CD4-positive, alpha-beta memory T cell (primary cell): ENCODE measurements at regions of chr3 and their contacts with region 1.

Region 1: DNA sequence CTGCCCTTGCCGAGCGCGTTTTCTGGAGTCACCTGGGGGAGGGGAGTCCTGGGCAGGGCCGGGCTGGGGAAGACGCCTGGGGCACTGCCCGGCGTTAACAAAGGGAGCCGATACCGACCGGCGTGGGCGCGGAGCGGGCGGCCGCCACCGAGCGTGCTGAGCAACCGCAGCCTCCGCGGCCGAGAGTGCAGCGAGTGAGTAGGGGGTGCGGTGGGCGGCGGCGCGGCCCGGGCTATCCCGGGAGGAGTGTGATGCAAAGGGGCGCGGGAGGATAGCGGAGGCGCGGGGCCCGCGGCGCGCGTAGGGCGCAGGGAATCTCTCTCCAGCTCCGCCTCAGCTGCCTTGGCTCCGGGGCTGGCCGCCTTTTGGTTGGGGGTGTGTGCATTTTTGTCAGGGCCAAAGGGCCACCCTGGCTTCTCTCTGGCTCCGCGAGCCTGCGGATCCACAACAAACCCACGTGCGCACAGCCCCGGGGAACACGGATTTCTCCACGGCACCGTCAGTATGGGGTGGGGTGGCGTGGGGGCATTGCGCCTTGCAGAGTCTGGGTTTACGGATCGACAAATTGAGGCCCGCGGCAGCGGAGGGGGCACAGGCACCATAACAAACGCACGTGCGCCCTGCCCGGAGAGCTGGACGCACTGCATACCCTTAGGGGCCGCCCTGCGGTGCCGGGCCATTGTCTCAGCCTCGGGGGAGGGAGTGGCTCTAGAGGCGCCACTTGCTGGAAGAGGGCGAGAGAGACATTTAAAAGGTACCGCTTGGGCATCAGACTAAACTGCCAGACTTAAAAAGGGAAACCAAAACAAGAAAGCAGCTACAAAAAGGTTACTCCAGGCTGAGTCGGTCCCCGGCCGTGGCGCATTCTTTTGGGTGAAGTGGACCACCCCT is 560 bp downstream of the ST6GAL1 start:
- DNase-seq: peak; percentile 74 to 84 (median 78)
- H3K4me3 ChIP-seq: peak overlapping the region; percentile 85 to 92
- H3K4me3 Mint-ChIP-seq: peak overlapping the region; percentile 91 to 100 (median 99)
- H3K27ac ChIP-seq: peak overlapping the region; percentile 81
- H3K27ac Mint-ChIP-seq: peak overlapping the region; percentile 90 to 98 (median 96)
- H3K4me1 ChIP-seq: peaks cover 37% of the 10 kb centered on the region
- H3K4me1 Mint-ChIP-seq: peaks cover 22 to 58% (median 39%) of the 10 kb centered on the region in 4 donors
- H3K27me3 ChIP-seq: no peaks in the 10 kb centered on the region
- H3K27me3 Mint-ChIP-seq: no peaks in the 10 kb centered on the region

Region 2: GRCh38 chr3:186621894-186622650 is 308.8 kb before region 1 on chr3:
- CTCF ChIA-PET with region 1: no interaction called
- POLR2A ChIA-PET with region 1: no interaction called
- intact Hi-C with region 1: no loop called
- DNase-seq: no peak
- H3K4me3 ChIP-seq: no peak overlapping the region
- H3K4me3 Mint-ChIP-seq: no peak overlapping the region
- H3K27ac ChIP-seq: no peak overlapping the region
- H3K27ac Mint-ChIP-seq: no peak overlapping the region
- H3K4me1 ChIP-seq: peaks cover 4% of the 10 kb centered on the region
- H3K4me1 Mint-ChIP-seq: peaks cover 2 to 6% (median 4%) of the 10 kb centered on the region in 4 donors
- H3K27me3 ChIP-seq: no peaks in the 10 kb centered on the region
- H3K27me3 Mint-ChIP-seq: peaks cover 8 to 14% of the 10 kb centered on the region in 2 donors

Region 3: GRCh38 chr3:186854954-186855353 is 75.9 kb before region 1 on chr3:
- CTCF ChIA-PET with region 1: interaction called, 184 read pairs
- POLR2A ChIA-PET with region 1: interaction called, 104 read pairs
- intact Hi-C with region 1: no loop called
- DNase-seq: no peak
- H3K4me3 ChIP-seq: no peak overlapping the region
- H3K4me3 Mint-ChIP-seq: no peak overlapping the region
- H3K27ac ChIP-seq: no peak overlapping the region
- H3K27ac Mint-ChIP-seq: no peak overlapping the region
- H3K4me1 ChIP-seq: peaks cover 3% of the 10 kb centered on the region
- H3K4me1 Mint-ChIP-seq: peaks cover 5 to 12% (median 8%) of the 10 kb centered on the region in 4 donors
- H3K27me3 ChIP-seq: no peaks in the 10 kb centered on the region
- H3K27me3 Mint-ChIP-seq: no peaks in the 10 kb centered on the region

Region 4: DNA sequence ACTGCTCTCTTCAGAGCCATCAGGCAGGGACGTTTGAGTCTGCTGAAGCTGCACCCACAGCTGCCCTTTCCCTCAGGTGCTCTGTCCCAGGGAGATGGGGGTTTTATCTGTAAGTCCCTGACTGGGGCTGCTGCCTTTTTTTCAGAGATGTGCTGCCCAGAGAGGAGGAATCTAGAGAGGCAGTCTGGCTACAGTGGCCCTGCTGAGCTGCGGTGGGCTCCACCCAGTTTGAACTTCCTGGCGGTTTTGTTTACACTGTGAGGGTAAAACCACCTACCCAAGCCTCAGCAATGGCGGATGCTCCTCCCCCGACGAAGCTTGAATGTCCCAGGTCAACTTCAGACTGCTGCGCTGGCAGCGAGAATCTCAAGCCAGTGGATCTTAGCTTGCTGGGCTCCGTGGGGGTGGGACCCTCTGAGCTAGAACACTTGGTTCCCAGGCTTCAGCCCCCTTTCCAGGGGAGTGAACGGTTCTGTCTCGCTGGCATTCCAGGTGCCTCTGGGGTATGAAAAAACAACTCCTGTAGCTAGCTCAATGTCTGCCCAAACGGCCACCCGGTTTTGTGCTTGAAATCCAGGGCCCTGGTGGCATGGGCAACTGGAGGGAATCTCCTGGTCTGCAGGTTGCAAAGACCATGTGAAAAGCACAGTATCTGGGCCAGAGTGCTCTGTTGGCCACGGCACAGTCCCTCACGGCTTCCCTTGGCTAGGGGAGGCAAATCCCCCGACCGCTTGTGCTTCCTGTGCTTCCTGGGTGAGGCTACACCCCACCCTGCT is 21.6 kb before region 1 on chr3:
- CTCF ChIA-PET with region 1: interaction called, 67 read pairs
- POLR2A ChIA-PET with region 1: interaction called, 136 read pairs
- intact Hi-C with region 1: loop called (anchors 1 kb)
- DNase-seq: peak; percentile 84 to 89 (median 87)
- H3K4me3 ChIP-seq: peak overlapping the region; percentile 50 to 66
- H3K4me3 Mint-ChIP-seq: peak overlapping the region; percentile 58 to 86 (median 77)
- H3K27ac ChIP-seq: peak overlapping the region; percentile 58
- H3K27ac Mint-ChIP-seq: peak overlapping the region; percentile 91 to 95 (median 94)
- H3K4me1 ChIP-seq: peaks cover 32% of the 10 kb centered on the region
- H3K4me1 Mint-ChIP-seq: peaks cover 22 to 52% (median 38%) of the 10 kb centered on the region in 4 donors
- H3K27me3 ChIP-seq: no peaks in the 10 kb centered on the region
- H3K27me3 Mint-ChIP-seq: no peaks in the 10 kb centered on the region

Region 5: GRCh38 chr3:186965141-186965879 is 34.4 kb after region 1 on chr3:
- CTCF ChIA-PET with region 1: interaction called, 5 read pairs
- POLR2A ChIA-PET with region 1: interaction called, 19 read pairs
- intact Hi-C with region 1: no loop called
- DNase-seq: no peak
- H3K4me3 ChIP-seq: no peak overlapping the region
- H3K4me3 Mint-ChIP-seq: no peak overlapping the region
- H3K27ac ChIP-seq: no peak overlapping the region
- H3K27ac Mint-ChIP-seq: peak overlapping the region in 6 of 7 donors; percentile 29 to 79 (median 54)
- H3K4me1 ChIP-seq: peaks cover 33% of the 10 kb centered on the region
- H3K4me1 Mint-ChIP-seq: peaks cover 37 to 77% (median 55%) of the 10 kb centered on the region in 4 donors
- H3K27me3 ChIP-seq: no peaks in the 10 kb centered on the region
- H3K27me3 Mint-ChIP-seq: no peaks in the 10 kb centered on the region

Region 6: DNA sequence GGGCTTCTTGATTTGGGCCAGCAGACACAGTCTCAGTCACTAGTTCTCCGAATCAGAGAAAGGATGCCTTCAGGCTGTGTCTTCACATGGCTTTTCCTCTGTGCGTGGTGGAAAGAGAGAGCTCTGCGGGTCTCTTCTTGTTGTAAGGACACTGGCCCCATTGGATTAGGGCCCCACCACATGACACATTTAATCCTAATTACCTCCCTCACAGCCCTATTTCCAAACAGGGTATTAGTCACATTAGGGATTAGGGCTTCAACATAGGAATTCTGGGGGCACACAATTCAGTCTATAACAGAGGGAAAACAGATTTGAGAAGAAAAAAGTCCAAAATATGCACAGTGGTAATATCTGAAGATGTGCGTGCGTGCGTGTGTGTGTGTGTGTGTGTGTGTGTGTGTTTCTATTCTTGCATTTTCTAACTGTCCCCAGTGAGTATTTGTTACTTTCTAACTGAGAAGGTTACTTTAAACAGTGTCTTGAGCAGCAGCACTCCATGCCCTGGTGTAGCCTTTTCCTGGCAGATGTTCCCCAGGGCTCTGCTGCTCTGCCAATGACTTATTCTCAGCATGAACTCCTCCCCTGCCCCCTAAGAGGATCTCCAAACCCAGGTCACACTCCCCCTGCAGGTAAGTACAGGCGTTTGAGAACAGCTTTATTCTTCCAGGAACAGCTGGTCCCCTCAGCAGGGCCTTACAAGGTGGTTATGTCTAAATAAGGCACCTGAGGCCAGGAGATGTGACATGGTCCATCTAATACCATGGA is 135.5 kb after region 1 on chr3:
- CTCF ChIA-PET with region 1: interaction called, 9 read pairs
- POLR2A ChIA-PET with region 1: interaction called, 3 read pairs
- intact Hi-C with region 1: loop called (anchors 2 kb)
- DNase-seq: peak; percentile 38 to 76 (median 56)
- H3K4me3 ChIP-seq: no peak overlapping the region
- H3K4me3 Mint-ChIP-seq: no peak overlapping the region
- H3K27ac ChIP-seq: no peak overlapping the region
- H3K27ac Mint-ChIP-seq: peak overlapping the region; percentile 44 to 94 (median 85)
- H3K4me1 ChIP-seq: peaks cover 46% of the 10 kb centered on the region
- H3K4me1 Mint-ChIP-seq: peaks cover 48 to 61% (median 54%) of the 10 kb centered on the region in 4 donors
- H3K27me3 ChIP-seq: no peaks in the 10 kb centered on the region
- H3K27me3 Mint-ChIP-seq: no peaks in the 10 kb centered on the region

Region 7: DNA sequence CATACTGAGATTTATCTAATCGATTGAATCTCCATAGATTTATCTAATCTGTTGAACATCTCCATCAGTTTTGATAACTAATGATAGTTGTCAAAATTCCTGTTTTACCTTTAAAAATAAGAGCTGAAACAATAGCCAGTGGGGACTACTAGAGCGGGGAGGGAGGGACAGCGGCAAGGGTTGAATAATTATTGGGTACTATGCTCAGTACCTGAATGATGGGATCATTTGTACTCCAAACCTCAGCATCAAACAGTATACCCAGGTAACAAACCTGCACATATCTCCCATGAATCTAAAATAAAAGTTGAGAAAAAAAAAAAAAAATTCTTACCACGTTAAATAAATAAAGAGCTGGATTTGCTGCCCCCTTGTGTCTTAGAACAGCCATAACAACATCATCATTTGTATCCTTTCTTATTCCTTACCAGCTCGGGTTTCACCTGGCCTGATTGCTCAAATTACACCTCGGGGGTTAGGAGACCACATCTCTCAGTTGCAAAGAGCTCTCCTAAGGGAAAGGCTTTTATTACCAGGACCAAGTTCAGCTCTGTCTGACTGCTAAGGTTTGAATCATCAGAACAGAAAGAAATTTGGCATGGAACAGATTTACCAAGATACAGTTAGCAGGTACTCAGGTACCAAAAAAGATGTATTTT is 234.1 kb after region 1 on chr3:
- CTCF ChIA-PET with region 1: interaction called, 18 read pairs
- POLR2A ChIA-PET with region 1: interaction called, 3 read pairs
- intact Hi-C with region 1: loop called (anchors 5 kb)
- DNase-seq: peak; percentile 66 to 73 (median 70)
- H3K4me3 ChIP-seq: no peak overlapping the region
- H3K4me3 Mint-ChIP-seq: no peak overlapping the region
- H3K27ac ChIP-seq: no peak overlapping the region
- H3K27ac Mint-ChIP-seq: no peak overlapping the region
- H3K4me1 ChIP-seq: peaks cover 2% of the 10 kb centered on the region
- H3K4me1 Mint-ChIP-seq: peaks cover 0 to 8% (median 4%) of the 10 kb centered on the region in 4 donors
- H3K27me3 ChIP-seq: no peaks in the 10 kb centered on the region
- H3K27me3 Mint-ChIP-seq: peaks cover 6 to 7% of the 10 kb centered on the region in 2 donors